Dorsolateral prefrontal cortex (tissue), 120 donors: ENCODE measurements at regions of chr20 and their contacts with region 1.

Region 1: DNA sequence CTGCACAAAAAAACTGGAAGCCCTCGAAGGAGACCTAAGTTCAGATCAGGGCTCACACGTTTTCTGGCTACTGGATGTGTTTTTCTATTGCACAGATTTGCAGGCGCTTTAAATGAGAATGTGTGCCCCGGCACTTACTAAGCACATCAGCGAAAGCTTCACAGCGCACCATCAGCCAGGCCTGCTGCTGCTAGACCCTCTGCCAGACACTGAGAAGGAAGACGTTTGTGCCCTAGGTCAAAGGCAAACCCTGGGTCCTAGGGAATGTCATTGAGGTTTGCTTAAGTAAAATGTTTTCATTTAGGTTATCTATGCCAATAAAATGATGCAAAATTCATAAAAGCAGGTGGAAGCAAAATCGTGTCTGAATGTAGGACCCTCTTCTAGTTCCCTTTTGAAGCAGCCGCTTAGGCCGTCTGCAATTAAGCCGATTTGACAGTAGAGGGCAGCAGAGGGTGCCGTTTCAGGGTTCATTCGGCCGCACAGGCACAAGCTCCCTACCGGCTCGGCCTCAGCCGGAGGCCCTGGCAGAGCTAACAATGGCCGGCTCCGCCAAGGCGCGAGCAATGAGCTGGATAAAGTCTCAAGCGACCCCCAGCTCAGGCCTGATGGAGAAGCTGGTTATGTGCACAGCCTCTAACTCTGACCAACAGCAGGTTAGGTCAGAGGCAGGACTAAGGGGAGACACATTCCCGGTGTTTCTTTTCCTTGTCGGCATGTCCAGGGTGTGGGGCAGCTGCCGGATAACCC is 107.2 kb upstream of the FOXA2 start:
- DNase-seq: peak; percentile 65 to 87 (median 78)
- H3K4me3 ChIP-seq: peak overlapping the region in 31 of 59 donors; percentile 3 to 48 (median 28)
- H3K27ac ChIP-seq: peak overlapping the region in 11 of 59 donors; percentile 31 to 62 (median 45)
- H3K27me3 ChIP-seq: peaks cover 0 to 7% (median 0%) of the 10 kb centered on the region in 45 donors
- CTCF ChIP-seq: peak; percentile 81 to 99 (median 93)

Region 2: DNA sequence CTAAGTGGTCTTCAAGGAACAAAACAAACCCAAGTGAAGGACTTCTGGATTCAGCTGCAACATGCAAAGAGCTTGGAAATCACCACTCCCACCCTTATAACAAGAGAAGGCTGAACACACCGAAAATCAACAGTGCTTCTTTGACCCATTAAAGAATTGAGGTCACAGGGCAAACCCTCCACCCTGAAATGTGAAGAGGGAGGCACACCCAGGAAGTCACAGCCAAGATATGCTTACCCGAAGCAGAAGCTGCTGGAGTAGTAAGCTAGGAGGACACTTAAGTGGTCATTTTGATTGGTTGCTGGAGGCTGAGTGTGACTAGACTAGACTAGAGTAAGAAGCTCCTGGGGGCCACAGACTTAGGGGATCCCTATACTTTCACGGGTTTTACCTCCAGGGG is 155.3 kb after region 1 on chr20:
- intact Hi-C with region 1: no loop called
- DNase-seq: no peak
- H3K4me3 ChIP-seq: no peak overlapping the region
- H3K27ac ChIP-seq: no peak overlapping the region
- H3K27me3 ChIP-seq: peaks cover 0 to 32% (median 0%) of the 10 kb centered on the region in 45 donors
- CTCF ChIP-seq: no peak

Region 3: GRCh38 chr20:23050847-23051631 is 359.5 kb after region 1 on chr20:
- intact Hi-C with region 1: loop called in 1 of 2 experiments (anchors 10 kb)
- DNase-seq: peak in 2 of 10 donors; percentile 50 to 60
- H3K4me3 ChIP-seq: peak overlapping the region; percentile 23 to 75 (median 52)
- H3K27ac ChIP-seq: peak overlapping the region in 24 of 59 donors; percentile 21 to 83 (median 64)
- H3K27me3 ChIP-seq: peaks cover 0 to 59% (median 46%) of the 10 kb centered on the region in 45 donors
- CTCF ChIP-seq: peak in 55 of 56 donors; percentile 25 to 73 (median 56)

Region 4: DNA sequence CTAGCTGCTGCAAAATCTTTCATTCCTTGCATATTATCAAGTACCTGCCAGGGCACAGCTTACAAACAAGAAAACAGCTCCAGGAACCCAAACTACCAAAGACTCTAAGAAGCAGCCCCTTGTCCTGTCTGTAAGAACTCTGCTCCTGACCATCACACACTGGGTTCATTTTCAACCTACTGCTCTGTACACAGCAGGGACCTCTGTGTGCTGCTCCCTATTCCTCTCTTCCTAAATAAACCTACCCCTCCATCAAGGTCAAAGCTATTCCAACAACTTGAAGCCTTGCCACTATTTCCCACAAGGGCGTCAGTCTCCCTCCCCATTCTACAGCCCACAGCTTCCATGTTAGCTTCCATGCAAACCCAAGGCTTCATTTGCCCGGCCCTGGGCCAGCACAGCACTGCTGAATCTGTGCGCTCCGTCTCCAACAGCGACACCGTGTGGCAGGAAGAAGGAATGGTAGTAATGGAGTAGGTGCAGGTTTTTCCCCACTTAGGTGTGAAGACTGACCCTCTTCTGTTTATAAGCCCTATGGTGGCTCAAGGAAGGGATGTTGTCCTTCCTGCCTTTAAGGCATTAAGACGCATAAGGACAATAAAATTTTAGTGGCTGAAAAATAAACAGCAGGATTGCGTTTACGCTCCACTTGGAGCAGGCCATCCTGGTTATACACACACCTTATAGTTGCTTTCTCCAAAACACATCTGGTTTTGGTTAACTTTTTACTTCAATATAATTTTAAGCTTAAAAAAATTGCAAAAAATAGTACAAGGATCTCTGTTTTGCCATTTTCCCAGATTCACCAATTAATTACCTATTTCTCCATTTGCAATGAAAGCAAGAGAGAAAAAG is 543.9 kb after region 1 on chr20:
- intact Hi-C with region 1: loop called (anchors 2 to 5 kb)
- DNase-seq: peak in 3 of 10 donors; percentile 43 to 52 (median 47)
- H3K4me3 ChIP-seq: no peak overlapping the region
- H3K27ac ChIP-seq: peak overlapping the region in 3 of 59 donors; percentile 8 to 34 (median 24)
- H3K27me3 ChIP-seq: peaks cover 0 to 3% (median 0%) of the 10 kb centered on the region in 45 donors
- CTCF ChIP-seq: peak; percentile 40 to 80 (median 73)

Region 5: GRCh38 chr20:23340524-23340923 is 649.0 kb after region 1 on chr20:
- intact Hi-C with region 1: loop called (anchors 1 to 5 kb)
- DNase-seq: peak; percentile 38 to 88 (median 71)
- H3K4me3 ChIP-seq: no peak overlapping the region
- H3K27ac ChIP-seq: no peak overlapping the region
- H3K27me3 ChIP-seq: no peaks in the 10 kb centered on the region
- CTCF ChIP-seq: peak in 55 of 56 donors; percentile 35 to 86 (median 69)

Region 6: GRCh38 chr20:23441850-23442313 is 750.3 kb after region 1 on chr20:
- intact Hi-C with region 1: loop called in 1 of 2 experiments (anchors 5 kb)
- DNase-seq: peak in 8 of 10 donors; percentile 50 to 83 (median 74)
- H3K4me3 ChIP-seq: no peak overlapping the region
- H3K27ac ChIP-seq: no peak overlapping the region
- H3K27me3 ChIP-seq: no peaks in the 10 kb centered on the region
- CTCF ChIP-seq: peak; percentile 65 to 94 (median 89)